Activated CD8-positive, alpha-beta T cell treated with anti-CD3 and anti-CD28 coated beads for 36 hours (primary cell): ENCODE measurements at regions of chr6 and their contacts with region 1.

Region 1: DNA sequence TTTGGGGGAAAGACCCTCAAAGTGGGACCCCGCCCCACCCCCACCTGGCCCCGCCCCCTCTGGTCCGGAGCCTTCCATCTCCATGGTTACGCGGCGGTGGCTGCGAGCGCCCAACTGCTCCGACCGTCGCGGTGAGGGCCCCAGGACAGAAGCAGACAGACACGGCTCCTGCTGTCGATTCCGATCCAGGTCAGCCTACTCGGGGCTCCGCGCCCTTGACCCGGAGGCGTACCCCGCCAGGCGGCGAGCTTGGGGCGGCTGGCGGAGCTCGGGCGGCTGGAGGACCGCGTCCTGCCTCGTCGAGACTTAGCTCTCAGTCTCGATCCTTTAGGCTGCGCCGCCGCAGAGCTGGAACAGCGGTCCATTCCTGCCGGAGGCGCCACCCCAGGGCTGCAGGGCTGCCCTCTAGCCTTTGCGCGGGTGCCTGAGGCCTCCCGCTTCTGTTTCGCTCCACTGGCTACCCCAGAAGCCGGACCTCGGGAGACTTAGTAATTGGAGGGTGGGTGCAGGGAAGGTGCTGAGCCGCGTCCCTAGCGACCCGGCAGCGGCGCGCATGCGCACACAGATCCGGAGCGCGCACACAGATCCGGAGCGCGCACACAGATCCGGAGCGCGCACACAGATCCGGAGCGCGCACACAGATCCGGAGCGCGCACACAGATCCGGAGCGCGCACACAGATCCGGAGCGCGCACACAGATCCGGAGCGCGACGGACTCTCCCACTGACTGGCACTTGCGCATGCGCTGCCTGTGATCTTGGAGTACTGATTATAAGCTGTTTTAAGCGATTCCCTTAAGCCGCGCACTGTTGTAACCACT is at the start of gene CFAP206:
- DNase-seq: peak; percentile 84
- ATAC-seq: peak; percentile 89
- H3K4me3 Mint-ChIP-seq: peak within 1 kb of the TSS; percentile 80
- H3K27ac Mint-ChIP-seq: no peak within 1 kb of the TSS
- H3K4me1 Mint-ChIP-seq: peaks cover 4% of the 10 kb centered on the region
- H3K27me3 Mint-ChIP-seq: peaks cover 16% of the 10 kb centered on the region
- CTCF ChIP-seq: no peak
- total RNA-seq, gene CFAP206: not detected

Region 2: DNA sequence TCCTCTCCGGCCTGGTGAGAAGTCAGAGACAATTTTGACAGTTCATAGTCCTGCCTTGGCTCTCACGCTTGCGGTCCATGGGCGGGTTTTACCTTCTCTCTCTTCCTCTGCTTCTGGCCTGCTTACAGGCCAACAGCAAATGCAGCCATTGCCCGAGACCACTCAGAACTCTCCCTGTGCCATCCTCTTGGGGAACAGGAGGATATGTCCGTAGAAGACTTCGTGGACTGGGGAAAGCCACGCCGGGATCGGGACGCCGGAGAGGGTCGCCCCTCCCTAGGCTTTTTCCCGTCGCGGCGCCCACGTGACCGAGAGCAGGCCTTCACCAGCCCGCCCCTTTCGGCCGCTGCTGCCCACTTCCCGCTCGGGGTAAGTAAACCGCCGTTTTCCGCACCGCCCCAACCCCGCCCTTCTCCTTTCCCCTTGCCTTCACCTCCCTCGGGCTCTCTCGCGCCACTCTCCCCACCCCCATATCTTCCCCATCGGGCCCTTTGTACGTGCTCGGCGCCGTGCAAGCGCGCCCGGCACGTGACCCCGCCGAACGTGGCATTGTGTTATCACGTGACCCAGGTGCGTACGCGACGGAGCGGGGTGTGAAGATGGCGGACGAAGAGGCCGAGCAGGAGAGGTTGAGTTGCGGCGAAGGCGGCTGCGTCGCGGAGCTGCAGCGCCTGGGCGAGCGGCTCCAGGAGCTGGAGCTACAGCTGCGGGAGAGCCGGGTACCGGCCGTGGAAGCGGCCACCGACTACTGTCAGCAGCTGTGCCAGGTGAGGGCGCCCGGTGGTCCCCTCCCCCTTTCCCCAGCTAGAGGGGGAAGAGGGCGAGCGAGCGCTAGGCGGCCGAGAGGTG is 252.9 kb before region 1 on chr6 and contains the start of gene ZNF292:
- CTCF ChIA-PET with region 1: no interaction called
- POLR2A ChIA-PET with region 1: no interaction called
- intact Hi-C with region 1: no loop called
- DNase-seq: peak; percentile 99
- ATAC-seq: peak; percentile 87
- H3K4me3 Mint-ChIP-seq: peak within 1 kb of the TSS; percentile 85
- H3K27ac Mint-ChIP-seq: peak within 1 kb of the TSS; percentile 100
- H3K4me1 Mint-ChIP-seq: peaks cover 32% of the 10 kb centered on the region
- H3K27me3 Mint-ChIP-seq: no peaks in the 10 kb centered on the region
- CTCF ChIP-seq: no peak
- total RNA-seq, gene ZNF292: 76.4 to 78.3 TPM

Region 3: DNA sequence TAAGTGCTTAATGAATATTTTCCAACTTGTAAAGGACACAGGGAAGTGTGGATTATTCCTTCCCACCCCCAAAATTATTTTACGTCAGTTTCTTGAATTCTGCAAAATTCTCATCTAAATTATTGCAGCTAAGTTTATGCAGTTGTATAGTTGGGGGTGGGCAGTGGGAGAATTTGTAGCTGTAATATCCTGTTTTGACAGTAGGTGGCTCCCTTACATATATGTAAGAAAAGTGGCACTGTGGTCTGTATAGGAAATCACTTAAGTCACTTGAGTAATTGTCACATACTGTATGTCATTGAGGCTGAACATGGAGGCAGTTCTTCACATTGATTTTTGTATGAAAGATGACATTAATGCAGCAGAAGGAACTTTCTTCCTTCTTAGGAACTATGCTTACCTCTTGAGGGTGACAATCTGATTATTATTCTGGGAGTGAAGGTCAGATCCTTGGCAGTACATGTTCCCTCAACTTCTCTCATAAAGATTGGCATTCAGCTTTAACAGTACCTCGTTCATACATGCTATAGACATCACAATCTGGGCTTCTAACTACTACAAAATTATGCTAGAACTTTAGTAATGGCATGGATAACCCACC is 15.0 kb before region 1 on chr6:
- CTCF ChIA-PET with region 1: interaction called, 29 read pairs
- POLR2A ChIA-PET with region 1: no interaction called
- intact Hi-C with region 1: no loop called
- DNase-seq: peak; percentile 54
- ATAC-seq: peak; percentile 98
- H3K4me3 Mint-ChIP-seq: no peak overlapping the region
- H3K27ac Mint-ChIP-seq: no peak overlapping the region
- H3K4me1 Mint-ChIP-seq: no peaks in the 10 kb centered on the region
- H3K27me3 Mint-ChIP-seq: no peaks in the 10 kb centered on the region
- CTCF ChIP-seq: peak; percentile 77

Region 4: DNA sequence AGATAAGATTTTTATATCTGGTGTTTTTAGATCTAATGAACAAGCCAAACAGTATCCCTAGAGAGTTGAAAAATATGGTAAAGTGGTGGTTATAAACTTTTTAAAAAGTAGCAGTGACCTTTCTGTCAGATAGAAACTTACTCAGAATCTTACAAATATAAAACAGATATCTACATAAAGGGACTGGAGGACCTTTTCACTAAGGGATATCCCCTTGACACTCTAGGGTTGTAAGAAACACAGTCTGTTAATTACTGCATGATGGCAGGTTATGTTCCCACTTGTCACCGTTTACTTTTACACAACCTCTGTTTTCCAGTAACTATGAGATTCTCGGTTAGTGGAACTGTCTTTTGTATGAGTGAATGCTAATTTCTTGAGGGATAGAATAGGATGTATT is 11.2 kb after region 1 on chr6:
- CTCF ChIA-PET with region 1: no interaction called
- POLR2A ChIA-PET with region 1: no interaction called
- intact Hi-C with region 1: no loop called
- DNase-seq: no peak
- ATAC-seq: no peak
- H3K4me3 Mint-ChIP-seq: no peak overlapping the region
- H3K27ac Mint-ChIP-seq: no peak overlapping the region
- H3K4me1 Mint-ChIP-seq: no peaks in the 10 kb centered on the region
- H3K27me3 Mint-ChIP-seq: peaks cover 2% of the 10 kb centered on the region
- CTCF ChIP-seq: no peak

Region 5: DNA sequence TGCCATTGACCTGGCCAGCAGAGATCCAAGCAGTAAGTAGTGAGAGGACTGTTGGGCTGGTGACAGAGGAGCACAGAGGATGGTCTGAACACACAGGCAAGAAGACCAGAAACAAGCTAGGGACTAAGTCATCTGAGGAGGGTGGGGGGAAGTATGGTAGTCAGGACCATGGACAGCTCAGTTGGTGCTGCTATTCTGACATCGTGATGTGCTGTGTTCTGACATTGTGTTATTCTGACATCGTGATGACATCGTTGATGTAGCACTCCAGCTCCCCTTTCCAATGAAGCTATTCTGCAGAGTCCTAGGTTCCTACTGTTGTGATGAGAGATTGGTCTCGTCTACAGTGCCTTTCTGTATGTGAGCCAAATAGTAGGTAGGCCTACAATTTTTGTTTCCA is 28.3 kb after region 1 on chr6:
- CTCF ChIA-PET with region 1: no interaction called
- POLR2A ChIA-PET with region 1: no interaction called
- intact Hi-C with region 1: no loop called
- DNase-seq: peak; percentile 61
- ATAC-seq: peak; percentile 72
- H3K4me3 Mint-ChIP-seq: no peak overlapping the region
- H3K27ac Mint-ChIP-seq: no peak overlapping the region
- H3K4me1 Mint-ChIP-seq: no peaks in the 10 kb centered on the region
- H3K27me3 Mint-ChIP-seq: peaks cover 9% of the 10 kb centered on the region
- CTCF ChIP-seq: no peak

Region 6: GRCh38 chr6:87472525-87473418 is 64.7 kb after region 1 on chr6 and contains the start of gene SLC35A1:
- CTCF ChIA-PET with region 1: no interaction called
- POLR2A ChIA-PET with region 1: no interaction called
- intact Hi-C with region 1: loop called (anchors 2 kb)
- DNase-seq: peak; percentile 86
- ATAC-seq: peak; percentile 90
- H3K4me3 Mint-ChIP-seq: peak within 1 kb of the TSS; percentile 82
- H3K27ac Mint-ChIP-seq: peak within 1 kb of the TSS; percentile 95
- H3K4me1 Mint-ChIP-seq: peaks cover 18% of the 10 kb centered on the region
- H3K27me3 Mint-ChIP-seq: peaks cover 5% of the 10 kb centered on the region
- CTCF ChIP-seq: peak; percentile 11
- total RNA-seq, gene SLC35A1: 7.7 to 7.9 TPM